PC-9 (cell line): ENCODE measurements at regions of chr12 and their contacts with region 1.

Region 1: GRCh38 chr12:50234347-50234746 is 49.0 kb downstream of the LIMA1 start:
- DNase-seq: peak in 1 of 2 experiments; percentile 68
- H3K4me3 ChIP-seq: no peak overlapping the region
- H3K27ac ChIP-seq: 0 out of 2 replicates have a peak overlapping the region, but pooled peaks have one; percentile 32
- H3K4me1 ChIP-seq: peaks cover 24% of the 10 kb centered on the region
- H3K27me3 ChIP-seq: no peaks in the 10 kb centered on the region
- CTCF ChIP-seq: no peak

Region 2: DNA sequence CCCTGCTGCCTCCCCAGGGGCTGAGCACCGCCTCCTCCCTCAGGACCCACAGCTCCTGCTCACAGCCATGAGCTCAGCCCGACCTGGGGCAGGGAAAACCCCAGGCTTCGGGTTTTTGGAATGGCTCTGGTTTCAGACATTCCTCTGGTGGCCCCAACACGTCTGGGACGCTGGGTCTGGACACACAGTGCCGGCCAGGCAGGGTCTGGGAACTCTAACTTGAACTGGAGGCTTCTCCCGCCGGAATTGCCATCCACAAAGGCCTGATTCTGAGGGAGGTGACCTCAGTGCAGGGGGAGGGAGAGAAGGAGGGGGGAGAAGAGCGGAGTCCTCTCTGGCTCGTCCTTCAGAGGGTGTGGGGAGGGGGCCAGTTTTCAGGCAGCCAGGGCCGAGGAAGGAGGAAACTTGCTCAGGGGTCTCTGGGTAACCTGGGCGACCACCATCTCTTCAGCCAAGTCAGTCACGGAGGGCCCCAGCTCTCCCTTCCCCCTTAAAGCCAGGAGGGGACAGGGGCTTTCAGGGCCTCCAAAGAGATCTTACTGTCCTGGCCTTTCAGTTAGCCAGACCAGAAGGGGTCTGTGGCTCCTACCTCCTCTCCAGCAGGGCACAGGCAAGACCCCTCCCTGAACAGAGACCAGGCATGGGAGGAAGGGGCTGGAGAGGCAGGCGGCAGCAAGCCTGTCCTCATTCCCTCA is 425.5 kb before region 1 on chr12:
- CTCF ChIA-PET with region 1: no interaction called
- POLR2A ChIA-PET with region 1: interaction called, 26 read pairs
- intact Hi-C with region 1: no loop called
- DNase-seq: no peak
- H3K4me3 ChIP-seq: no peak overlapping the region
- H3K27ac ChIP-seq: no peak overlapping the region
- H3K4me1 ChIP-seq: no peaks in the 10 kb centered on the region
- H3K27me3 ChIP-seq: no peaks in the 10 kb centered on the region
- CTCF ChIP-seq: no peak